ENCODE measurements at regions of chr18 and their contacts with region 1.

Region 1: GRCh38 chr18:9792565-9793245 is 84.6 kb downstream of the RAB31 start:
- DNase-seq: peak; percentile 33
- ATAC-seq: no peak
- H3K4me3 ChIP-seq: no peak overlapping the region
- H3K27ac ChIP-seq: no peak overlapping the region
- H3K4me1 ChIP-seq: no peaks in the 10 kb centered on the region
- H3K27me3 ChIP-seq: no peaks in the 10 kb centered on the region
- CTCF ChIP-seq: peak; percentile 76

Region 2: DNA sequence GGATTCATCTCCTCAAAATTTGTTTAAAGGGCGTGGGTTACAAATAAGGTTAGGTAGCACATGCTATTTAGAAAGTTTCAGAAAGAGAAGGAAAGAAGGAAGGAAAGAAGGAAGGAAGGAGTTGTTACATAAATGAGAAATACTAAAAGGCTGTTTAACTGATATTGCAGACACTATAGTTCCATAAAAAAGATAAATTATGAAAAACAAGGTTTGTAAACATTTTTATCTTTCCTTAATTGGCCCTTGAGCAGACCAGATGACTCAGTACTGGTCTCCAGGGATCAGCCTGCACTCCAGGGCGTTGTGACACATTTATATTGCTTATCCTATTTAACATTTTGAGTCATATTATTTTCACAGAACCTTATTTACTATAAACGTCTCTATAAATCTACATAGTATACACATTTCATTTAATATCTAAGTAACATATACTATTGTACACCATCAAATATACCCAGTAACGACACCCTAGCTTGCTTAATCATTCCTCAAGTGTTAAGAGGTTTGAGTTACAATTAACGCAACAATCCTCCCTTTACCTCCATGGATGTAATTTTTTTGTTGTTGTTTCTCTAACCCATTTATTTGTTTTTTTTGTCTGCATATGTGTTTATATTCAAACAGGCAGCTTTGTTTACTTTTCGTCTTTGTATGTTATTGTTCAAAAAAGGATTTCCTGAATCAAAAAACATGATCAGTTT is 87.4 kb before region 1 on chr18:
- CTCF ChIA-PET with region 1: no interaction called
- POLR2A ChIA-PET with region 1: interaction called, 13 read pairs
- intact Hi-C with region 1: no loop called
- DNase-seq: peak; percentile 68
- ATAC-seq: peak; percentile 89
- H3K4me3 ChIP-seq: no peak overlapping the region
- H3K27ac ChIP-seq: peak overlapping the region; percentile 42
- H3K4me1 ChIP-seq: peaks cover 19% of the 10 kb centered on the region
- H3K27me3 ChIP-seq: no peaks in the 10 kb centered on the region
- CTCF ChIP-seq: no peak

Region 3: DNA sequence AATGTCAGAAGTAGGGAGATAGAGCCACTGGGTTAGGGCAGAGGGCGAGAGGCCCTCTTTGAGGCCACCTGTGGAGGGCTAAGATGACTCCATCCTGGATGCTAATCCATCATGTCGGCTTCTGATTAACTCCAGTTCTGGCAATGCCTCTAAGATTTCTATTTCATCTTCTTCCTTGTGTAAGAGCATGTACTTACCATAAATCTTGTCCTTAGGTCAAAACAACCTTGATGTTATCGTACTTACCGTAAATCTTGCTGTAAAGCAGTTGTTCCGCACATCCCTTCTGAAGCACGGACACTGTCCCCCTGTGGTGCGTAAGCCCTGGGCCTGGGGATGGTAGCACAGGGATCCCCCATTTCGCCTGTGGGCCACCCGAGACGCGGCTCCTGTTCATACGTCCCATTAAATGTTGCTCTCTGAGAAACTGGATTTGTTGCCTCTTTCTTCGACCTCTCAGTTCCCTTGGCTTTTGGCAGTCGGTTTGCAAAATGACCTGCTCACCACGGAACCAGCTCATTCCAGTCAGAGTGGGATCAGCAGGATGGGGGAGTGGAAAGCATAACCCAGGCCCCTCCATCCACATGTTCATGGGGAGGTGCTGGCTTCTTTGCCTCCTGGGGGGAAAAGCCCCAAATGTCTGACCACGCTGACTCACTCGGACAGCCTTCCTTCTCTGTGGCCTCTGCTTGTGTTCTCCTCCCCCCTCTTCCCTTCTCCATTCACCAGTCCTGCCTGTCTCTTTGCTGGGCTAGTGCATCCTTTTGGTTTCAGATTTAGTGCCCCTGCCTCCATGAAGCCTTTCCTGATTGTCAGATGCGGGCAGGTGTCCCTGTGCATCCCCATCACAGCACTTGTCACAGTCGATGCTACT is 34.7 kb before region 1 on chr18:
- CTCF ChIA-PET with region 1: no interaction called
- POLR2A ChIA-PET with region 1: no interaction called
- intact Hi-C with region 1: no loop called
- DNase-seq: no peak
- ATAC-seq: no peak
- H3K4me3 ChIP-seq: no peak overlapping the region
- H3K27ac ChIP-seq: no peak overlapping the region
- H3K4me1 ChIP-seq: no peaks in the 10 kb centered on the region
- H3K27me3 ChIP-seq: no peaks in the 10 kb centered on the region
- CTCF ChIP-seq: no peak